ENCODE measurements at regions of chr2 and their contacts with region 1.

Region 1: GRCh38 chr2:26088032-26088643 is 54.3 kb downstream of the RAB10 start:
- DNase-seq: no peak
- H3K4me3 Mint-ChIP-seq: no peak overlapping the region
- H3K27ac Mint-ChIP-seq: no peak overlapping the region
- H3K4me1 Mint-ChIP-seq: peaks cover 48% of the 10 kb centered on the region
- H3K27me3 Mint-ChIP-seq: no peaks in the 10 kb centered on the region

Region 2: DNA sequence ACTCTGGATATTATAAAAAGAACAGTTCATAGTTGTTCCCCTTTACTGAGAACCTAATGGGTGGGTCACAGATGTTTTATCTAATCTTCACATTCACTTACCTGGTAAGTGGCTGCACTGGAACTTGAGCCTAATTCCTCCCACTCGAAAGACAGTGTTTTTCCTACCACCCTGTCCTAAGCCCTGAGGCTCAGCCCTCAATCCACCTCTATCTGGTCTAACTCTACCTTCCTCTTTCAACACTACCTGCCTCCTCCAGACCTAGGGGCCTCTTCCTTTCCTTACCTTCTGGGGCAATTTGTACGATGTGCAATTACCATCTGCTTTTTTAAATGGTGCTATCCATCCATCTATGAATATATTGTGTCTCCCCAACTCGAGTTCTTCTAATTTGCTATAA is 96.2 kb before region 1 on chr2:
- CTCF ChIA-PET with region 1: interaction called, 13 read pairs
- POLR2A ChIA-PET with region 1: no interaction called
- DNase-seq: no peak
- H3K4me3 Mint-ChIP-seq: no peak overlapping the region
- H3K27ac Mint-ChIP-seq: no peak overlapping the region
- H3K4me1 Mint-ChIP-seq: peaks cover 28% of the 10 kb centered on the region
- H3K27me3 Mint-ChIP-seq: peaks cover 12% of the 10 kb centered on the region

Region 3: GRCh38 chr2:26068602-26069298 is 19.4 kb before region 1 on chr2:
- CTCF ChIA-PET with region 1: interaction called, 5 read pairs
- POLR2A ChIA-PET with region 1: interaction called, 41 read pairs
- DNase-seq: peak; percentile 71
- H3K4me3 Mint-ChIP-seq: peak overlapping the region; percentile 68
- H3K27ac Mint-ChIP-seq: peak overlapping the region; percentile 95
- H3K4me1 Mint-ChIP-seq: peaks cover 71% of the 10 kb centered on the region
- H3K27me3 Mint-ChIP-seq: no peaks in the 10 kb centered on the region

Region 4: DNA sequence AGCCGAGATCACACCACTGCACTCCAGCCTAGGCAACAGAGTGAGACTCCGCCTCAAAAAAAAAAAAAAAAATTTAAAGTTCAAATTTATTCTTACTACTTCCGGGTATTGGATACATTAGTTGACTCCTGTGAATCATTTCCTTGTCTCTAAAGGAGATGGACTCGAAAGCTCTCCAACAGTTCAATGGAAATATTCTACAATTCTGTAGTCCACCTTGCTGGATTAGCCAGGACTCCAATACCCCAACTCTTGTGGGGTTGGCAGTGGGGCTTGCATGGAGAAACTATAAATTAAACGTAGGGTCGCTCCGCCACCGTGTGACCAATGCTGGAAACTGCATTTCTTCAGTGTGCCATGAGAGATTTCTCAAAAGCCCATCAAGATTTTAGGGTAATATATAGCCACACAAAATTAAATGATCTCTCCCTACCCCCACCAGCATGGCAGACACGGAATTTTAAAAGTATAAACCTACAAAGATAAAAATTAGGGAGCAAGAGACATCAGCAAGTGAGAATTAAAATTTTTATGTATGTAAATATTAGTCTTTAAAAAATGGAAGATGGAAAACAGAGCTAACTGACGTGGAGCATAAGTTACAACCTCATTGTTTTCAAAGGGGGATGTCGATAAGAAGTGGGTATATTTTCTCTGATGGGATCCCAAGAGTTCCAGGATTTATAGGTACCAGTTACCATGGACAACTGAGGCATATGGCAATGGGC is 57.0 kb after region 1 on chr2:
- CTCF ChIA-PET with region 1: interaction called, 17 read pairs
- POLR2A ChIA-PET with region 1: no interaction called
- DNase-seq: peak; percentile 74
- H3K4me3 Mint-ChIP-seq: no peak overlapping the region
- H3K27ac Mint-ChIP-seq: no peak overlapping the region
- H3K4me1 Mint-ChIP-seq: no peaks in the 10 kb centered on the region
- H3K27me3 Mint-ChIP-seq: peaks cover 10% of the 10 kb centered on the region

Measured in activated CD4-positive, alpha-beta memory T cell treated with anti-CD3 and anti-CD28 coated beads, Interleukin-2, amount 10 ng/mL, durations not matched to agents 7 days and 5 days (primary cell).